Activated CD4-positive, alpha-beta T cell treated with anti-CD3 and anti-CD28 coated beads for 36 hours (primary cell): ENCODE measurements at regions of chr5 and their contacts with region 1.

Region 1: GRCh38 chr5:110063640-110064602 is 374.2 kb downstream of the MAN2A1 start:
- DNase-seq: peak; percentile 9
- ATAC-seq: peak; percentile 93
- H3K4me3 Mint-ChIP-seq: no peak overlapping the region
- H3K27ac Mint-ChIP-seq: peak overlapping the region; percentile 39
- H3K4me1 Mint-ChIP-seq: peaks cover 20% of the 10 kb centered on the region
- H3K27me3 Mint-ChIP-seq: no peaks in the 10 kb centered on the region

Region 2: DNA sequence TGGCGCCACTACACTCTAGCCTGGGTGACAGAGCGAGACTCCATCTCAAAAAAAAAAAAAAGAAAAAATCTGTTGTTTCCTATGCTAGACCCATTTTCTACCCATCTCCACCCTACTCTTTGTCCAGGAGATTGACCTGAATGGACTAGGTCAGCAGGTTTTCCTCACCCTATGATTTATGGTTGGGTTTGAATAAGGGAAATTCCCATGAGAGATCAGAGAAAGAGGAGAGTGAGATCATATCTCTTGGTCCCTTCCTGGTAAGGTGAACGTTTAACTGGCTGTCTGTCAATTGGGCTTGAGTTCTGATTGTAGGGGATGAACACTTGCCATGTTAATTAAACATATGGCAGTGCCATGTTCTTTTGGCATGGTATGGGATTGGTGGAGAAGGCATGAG is 13.2 kb after region 1 on chr5:
- CTCF ChIA-PET with region 1: interaction called, 3 read pairs
- POLR2A ChIA-PET with region 1: no interaction called
- intact Hi-C with region 1: loop called in 1 of 2 experiments (anchors 2 kb)
- DNase-seq: no peak
- ATAC-seq: peak; percentile 49
- H3K4me3 Mint-ChIP-seq: no peak overlapping the region
- H3K27ac Mint-ChIP-seq: peak overlapping the region; percentile 63
- H3K4me1 Mint-ChIP-seq: peaks cover 6% of the 10 kb centered on the region
- H3K27me3 Mint-ChIP-seq: peaks cover 3% of the 10 kb centered on the region

Region 3: DNA sequence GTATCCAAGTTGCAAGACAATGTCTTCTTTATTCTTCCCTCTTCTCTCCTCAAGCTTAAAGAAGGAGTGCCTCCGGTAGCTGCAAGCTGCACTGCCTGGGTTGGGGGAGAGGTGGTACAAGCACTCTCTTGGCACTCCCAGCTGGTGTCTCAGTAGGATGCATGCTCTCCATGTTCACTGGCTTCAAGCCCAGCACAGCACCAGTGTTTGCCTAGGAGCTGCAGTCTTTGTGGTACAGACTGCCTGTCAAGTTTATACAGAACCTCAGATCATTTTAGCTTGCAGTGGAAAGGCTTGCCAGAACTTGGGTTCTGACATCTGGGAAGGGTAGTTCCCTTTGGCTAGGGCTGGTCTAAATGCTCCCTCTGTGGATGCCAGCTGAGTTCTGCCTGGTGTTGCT is 131.4 kb after region 1 on chr5:
- CTCF ChIA-PET with region 1: no interaction called
- POLR2A ChIA-PET with region 1: no interaction called
- intact Hi-C with region 1: no loop called
- DNase-seq: no peak
- ATAC-seq: no peak
- H3K4me3 Mint-ChIP-seq: no peak overlapping the region
- H3K27ac Mint-ChIP-seq: no peak overlapping the region
- H3K4me1 Mint-ChIP-seq: no peaks in the 10 kb centered on the region
- H3K27me3 Mint-ChIP-seq: no peaks in the 10 kb centered on the region

Region 4: DNA sequence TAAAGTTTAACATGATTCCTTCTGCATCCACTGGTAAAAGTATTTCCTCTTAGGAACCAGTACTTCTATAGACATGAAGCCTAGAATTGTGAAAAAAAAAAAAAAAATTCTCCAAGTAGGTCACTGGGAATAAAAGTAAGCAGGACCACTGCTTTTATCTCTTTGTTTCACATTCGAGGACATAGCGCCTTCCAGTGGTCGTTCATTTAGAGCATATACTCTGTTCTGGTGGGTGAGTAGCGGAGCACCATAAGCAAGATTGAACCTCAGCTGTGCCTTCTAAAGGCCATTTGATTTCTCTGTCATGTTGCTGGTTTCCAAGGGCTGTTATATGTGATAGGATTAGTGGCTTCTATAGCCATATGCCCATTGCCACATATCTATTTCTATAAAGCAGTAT is 269.5 kb after region 1 on chr5:
- CTCF ChIA-PET with region 1: no interaction called
- POLR2A ChIA-PET with region 1: no interaction called
- intact Hi-C with region 1: no loop called
- DNase-seq: peak; percentile 32
- ATAC-seq: no peak
- H3K4me3 Mint-ChIP-seq: no peak overlapping the region
- H3K27ac Mint-ChIP-seq: no peak overlapping the region
- H3K4me1 Mint-ChIP-seq: no peaks in the 10 kb centered on the region
- H3K27me3 Mint-ChIP-seq: no peaks in the 10 kb centered on the region

Region 5: DNA sequence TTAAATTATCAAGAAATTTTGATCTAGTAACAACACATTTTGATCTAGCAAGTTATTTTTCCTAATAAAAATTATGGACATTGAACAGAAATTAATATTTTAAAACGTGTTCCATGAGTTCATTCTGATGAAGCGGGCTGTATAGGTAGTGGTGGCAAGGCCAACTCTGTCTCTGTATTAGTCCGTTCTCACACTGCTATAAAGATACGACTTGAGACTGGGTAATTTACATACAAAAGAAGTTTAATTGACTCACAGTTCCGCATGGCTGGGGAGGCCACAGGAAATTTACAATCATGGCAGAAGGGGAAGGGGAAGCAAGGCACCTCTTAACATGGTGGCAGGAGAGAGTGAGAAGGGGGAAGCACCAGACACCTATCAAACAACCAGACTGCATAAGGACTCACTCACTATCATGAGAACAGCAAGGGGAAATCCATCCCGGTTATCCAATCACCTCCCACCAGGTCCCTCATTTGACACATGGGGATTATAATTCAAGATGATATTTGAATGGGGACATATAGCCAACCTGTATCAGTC is 601.3 kb after region 1 on chr5:
- CTCF ChIA-PET with region 1: no interaction called
- POLR2A ChIA-PET with region 1: no interaction called
- intact Hi-C with region 1: no loop called
- DNase-seq: no peak
- ATAC-seq: no peak
- H3K4me3 Mint-ChIP-seq: no peak overlapping the region
- H3K27ac Mint-ChIP-seq: no peak overlapping the region
- H3K4me1 Mint-ChIP-seq: no peaks in the 10 kb centered on the region
- H3K27me3 Mint-ChIP-seq: no peaks in the 10 kb centered on the region